Activated T-helper 1 cell treated with anti-CD3 and anti-CD28 coated beads, Interleukin-12 subunit alpha, Interleukin-12 subunit beta, Interleukin-2, Interleukin-4 antibody, amounts not matched to agents 30 ng/mL and 10 ng/mL and 1 ng/mL, durations not matched to agents 14 hours and 24 hours and 36 hours (primary cell): ENCODE measurements at regions of chr19 and their contacts with region 1.

Region 1: DNA sequence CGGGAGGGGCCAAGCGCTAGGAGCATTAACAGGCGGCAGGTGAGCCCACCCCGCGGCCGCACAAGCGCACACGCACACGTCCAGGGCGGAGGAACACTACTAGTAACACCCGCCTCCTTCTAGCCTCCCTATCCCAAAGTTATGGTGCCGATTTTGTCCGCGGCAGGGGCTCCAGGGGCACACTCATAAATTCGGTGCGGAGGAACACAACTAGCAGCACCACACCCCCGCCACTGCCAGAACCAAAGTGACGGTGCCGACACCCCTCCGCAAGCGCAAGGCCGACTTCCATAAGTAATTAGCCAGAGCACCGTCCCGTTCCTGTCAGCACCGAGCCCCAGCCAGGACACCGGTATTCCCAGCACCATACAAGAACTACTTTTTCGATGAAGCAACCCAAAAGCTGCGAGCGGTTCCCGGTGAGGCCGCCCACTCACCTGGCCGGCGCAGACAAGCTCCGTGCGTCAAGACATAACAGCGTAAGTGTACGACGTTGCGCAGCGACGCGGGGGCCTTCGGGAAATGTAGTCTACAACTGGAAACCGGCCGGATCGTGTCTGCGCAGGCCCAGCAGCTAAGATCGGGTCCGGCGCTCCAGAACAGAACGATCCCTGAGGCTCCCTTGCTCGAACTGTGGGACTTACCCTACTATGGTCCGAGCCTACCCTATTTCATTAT is at the starts of genes ZNF540 and ZNF571:
- DNase-seq: peak; percentile 81
- H3K4me3 Mint-ChIP-seq: peak within 1 kb of the TSS; percentile 88
- H3K27ac Mint-ChIP-seq: peak within 1 kb of the TSS; percentile 91
- H3K4me1 Mint-ChIP-seq: peaks cover 24% of the 10 kb centered on the region
- H3K27me3 Mint-ChIP-seq: no peaks in the 10 kb centered on the region
- total RNA-seq, gene ZNF540: 0.39 and 0.70 TPM in 2 replicates
- total RNA-seq, gene ZNF571: 0.64 and 1.4 TPM in 2 replicates

Region 2: GRCh38 chr19:36973021-36973843 is 621.2 kb before region 1 on chr19:
- intact Hi-C with region 1: loop called (anchors 5 kb)
- DNase-seq: peak; percentile 67
- H3K4me3 Mint-ChIP-seq: peak overlapping the region; percentile 98
- H3K27ac Mint-ChIP-seq: peak overlapping the region; percentile 87
- H3K4me1 Mint-ChIP-seq: peaks cover 12% of the 10 kb centered on the region
- H3K27me3 Mint-ChIP-seq: no peaks in the 10 kb centered on the region

Region 3: DNA sequence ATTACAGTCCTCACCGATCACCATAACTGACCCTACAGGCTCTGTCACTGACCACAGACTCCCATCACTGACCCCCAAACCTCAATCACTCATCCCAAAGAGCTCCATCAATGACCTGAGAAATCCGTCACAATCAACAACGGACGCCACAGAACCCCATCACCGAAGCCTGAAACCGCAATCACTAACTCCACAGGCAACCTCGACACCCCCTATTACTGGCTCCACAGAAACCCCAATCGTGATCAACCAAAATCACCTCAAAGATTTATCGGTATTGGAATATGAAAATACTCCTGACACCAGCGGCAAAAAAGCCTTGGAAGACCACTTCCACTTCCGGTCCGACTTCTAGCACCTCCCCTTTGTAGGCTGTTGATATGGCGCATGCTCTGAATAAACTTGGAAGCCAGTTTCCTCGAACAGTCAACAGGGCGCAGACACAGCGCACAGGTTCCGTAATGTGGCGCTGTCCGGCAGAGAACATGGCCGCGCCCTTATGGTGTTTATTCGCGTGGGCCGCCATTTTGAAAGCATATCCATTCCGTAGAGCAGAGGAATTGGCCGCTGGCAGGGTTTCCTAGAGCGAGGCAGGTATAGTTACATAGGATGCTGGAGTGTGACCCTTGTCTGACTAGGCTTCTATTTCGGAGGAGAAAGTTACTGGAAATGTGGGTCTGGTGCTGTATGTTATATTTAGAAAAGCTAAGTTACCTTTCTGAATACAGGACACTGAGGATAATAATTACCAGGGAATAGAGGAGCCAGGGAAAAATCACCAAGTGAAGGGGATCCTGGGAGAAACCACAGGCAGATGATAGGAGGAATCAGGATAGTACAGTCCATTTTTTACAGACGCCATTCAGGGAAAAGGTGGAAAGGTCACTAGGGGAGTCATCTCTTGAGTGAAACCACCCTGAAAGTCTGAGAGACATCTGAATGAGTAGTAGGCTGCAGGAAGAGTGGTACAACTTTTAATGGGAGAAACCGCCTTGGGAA is 421.8 kb before region 1 on chr19 and contains the start of gene ZNF585A:
- intact Hi-C with region 1: loop called (anchors 1 kb)
- DNase-seq: peak; percentile 74
- H3K4me3 Mint-ChIP-seq: no peak within 1 kb of the TSS
- H3K27ac Mint-ChIP-seq: no peak within 1 kb of the TSS
- H3K4me1 Mint-ChIP-seq: no peaks in the 10 kb centered on the region
- H3K27me3 Mint-ChIP-seq: no peaks in the 10 kb centered on the region
- total RNA-seq, gene ZNF585A: 1.2 and 2.6 TPM in 2 replicates

Region 4: DNA sequence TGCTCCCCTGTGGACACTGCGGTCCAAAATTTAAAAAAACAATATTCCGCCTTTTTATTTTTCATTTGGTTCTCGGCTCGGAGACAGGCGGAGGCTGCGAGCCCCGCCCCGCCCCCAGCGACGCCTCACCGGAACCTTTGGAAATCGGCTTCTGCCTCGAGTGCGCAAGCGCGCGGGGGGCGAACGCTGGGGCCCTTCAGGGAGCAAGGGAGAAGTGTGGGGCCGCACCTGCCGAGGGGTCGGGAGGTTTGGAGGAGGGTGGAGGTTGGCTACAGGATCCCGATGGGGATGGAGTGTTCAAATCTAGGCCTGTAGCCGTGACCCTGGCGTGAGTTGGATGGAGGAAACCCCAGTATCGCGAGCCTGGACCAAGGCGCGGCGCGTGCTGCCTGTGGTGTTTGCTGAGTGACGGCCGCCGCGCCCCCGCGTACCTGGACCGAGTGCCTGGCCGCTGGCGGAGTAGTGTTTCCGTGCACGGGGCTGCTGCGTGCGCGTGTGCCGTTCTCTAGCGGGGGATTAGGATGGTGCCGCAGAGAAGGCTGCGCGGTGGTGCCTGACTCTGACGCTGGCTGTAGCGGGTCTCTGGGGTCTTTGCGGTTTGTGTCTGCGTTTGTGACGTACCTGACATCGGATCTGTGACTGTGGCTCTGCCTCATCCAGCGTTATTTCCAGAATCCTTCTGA is 61.4 kb after region 1 on chr19:
- intact Hi-C with region 1: loop called (anchors 1 kb)
- DNase-seq: peak; percentile 83
- H3K4me3 Mint-ChIP-seq: peak overlapping the region; percentile 90
- H3K27ac Mint-ChIP-seq: peak overlapping the region; percentile 93
- H3K4me1 Mint-ChIP-seq: peaks cover 28% of the 10 kb centered on the region
- H3K27me3 Mint-ChIP-seq: no peaks in the 10 kb centered on the region

Region 5: GRCh38 chr19:37779127-37780005 is 184.9 kb after region 1 on chr19 and contains the start of gene ZNF573:
- intact Hi-C with region 1: loop called (anchors 1 kb)
- DNase-seq: peak; percentile 73
- H3K4me3 Mint-ChIP-seq: peak within 1 kb of the TSS; percentile 95
- H3K27ac Mint-ChIP-seq: peak within 1 kb of the TSS; percentile 86
- H3K4me1 Mint-ChIP-seq: peaks cover 15% of the 10 kb centered on the region
- H3K27me3 Mint-ChIP-seq: no peaks in the 10 kb centered on the region
- total RNA-seq, gene ZNF573: 3.7 and 5.6 TPM in 2 replicates